Gastrocnemius medialis (tissue), 4 donors: ENCODE measurements at regions of chr2 and their contacts with region 1.

Region 1: DNA sequence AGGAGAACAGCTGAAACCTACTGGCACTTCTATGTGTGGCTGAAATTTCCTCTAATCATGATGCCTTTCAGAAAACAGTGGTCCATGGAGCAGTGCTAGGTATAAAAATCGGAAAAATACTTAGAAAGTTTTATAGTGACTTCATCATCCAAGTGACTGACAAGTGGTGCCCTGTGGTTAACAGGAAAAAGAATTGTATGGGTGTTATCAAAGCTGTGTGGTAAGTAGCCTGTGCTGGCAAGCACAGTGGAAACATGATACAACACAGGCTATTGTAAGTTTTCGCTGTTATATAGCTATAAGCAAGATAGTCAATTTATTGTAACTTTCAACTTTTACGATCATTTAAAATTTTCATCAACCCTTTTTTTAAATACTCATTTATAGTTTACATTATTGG is 1599.7 kb upstream of the ZEB2 start:
- DNase-seq: no peak
- ATAC-seq: no peak
- H3K4me3 ChIP-seq: no peak overlapping the region
- H3K27ac ChIP-seq: no peak overlapping the region
- H3K4me1 ChIP-seq: no peaks in the 10 kb centered on the region
- H3K27me3 ChIP-seq: no peaks in the 10 kb centered on the region
- CTCF ChIP-seq: no peak
- POLR2A ChIP-seq: no peak

Region 2: DNA sequence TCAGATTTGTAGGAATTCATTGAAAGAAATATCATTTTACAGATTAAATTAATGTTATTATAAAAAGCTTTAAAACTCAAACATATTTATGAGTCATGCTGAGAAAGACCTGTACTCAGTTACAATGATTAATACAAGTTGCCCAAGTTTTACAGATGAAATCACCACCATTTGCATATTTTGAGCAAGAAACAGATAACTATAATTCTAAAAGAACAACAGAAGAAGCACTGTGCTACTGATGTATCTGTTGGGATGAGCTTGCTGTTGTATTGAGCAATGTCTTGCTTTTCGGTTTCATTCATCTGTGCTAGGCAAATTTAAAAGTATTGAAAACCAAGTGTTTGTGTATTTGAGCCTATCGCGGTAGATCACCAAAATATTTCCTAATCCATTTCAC is 10.6 kb before region 1 on chr2:
- in situ Hi-C with region 1: no loop called
- intact Hi-C with region 1: loop called (anchors 1 kb)
- DNase-seq: no peak
- ATAC-seq: no peak
- H3K4me3 ChIP-seq: no peak overlapping the region
- H3K27ac ChIP-seq: no peak overlapping the region
- H3K4me1 ChIP-seq: no peaks in the 10 kb centered on the region
- H3K27me3 ChIP-seq: no peaks in the 10 kb centered on the region
- CTCF ChIP-seq: no peak
- POLR2A ChIP-seq: no peak